A549 (cell line): ENCODE measurements at regions of chr15 and their contacts with region 1.

Region 1: GRCh38 chr15:100559330-100559729 is 30.6 kb upstream of the CERS3 start:
- DNase-seq: peak in 1 of 2 experiments; percentile 36
- ATAC-seq: peak in 1 of 2 experiments; percentile 59; a peak in 4 of 6 replicates
- H3K4me3 ChIP-seq: no peak overlapping the region
- H3K27ac ChIP-seq: no peak overlapping the region
- H3K4me1 ChIP-seq: no peaks in the 10 kb centered on the region; the same call in 2 of the 3 replicates
- CTCF ChIP-seq: no peak
- EP300 ChIP-seq: no peak
- POLR2A ChIP-seq: no peak
- RAD21 ChIP-seq: no peak

Region 2: DNA sequence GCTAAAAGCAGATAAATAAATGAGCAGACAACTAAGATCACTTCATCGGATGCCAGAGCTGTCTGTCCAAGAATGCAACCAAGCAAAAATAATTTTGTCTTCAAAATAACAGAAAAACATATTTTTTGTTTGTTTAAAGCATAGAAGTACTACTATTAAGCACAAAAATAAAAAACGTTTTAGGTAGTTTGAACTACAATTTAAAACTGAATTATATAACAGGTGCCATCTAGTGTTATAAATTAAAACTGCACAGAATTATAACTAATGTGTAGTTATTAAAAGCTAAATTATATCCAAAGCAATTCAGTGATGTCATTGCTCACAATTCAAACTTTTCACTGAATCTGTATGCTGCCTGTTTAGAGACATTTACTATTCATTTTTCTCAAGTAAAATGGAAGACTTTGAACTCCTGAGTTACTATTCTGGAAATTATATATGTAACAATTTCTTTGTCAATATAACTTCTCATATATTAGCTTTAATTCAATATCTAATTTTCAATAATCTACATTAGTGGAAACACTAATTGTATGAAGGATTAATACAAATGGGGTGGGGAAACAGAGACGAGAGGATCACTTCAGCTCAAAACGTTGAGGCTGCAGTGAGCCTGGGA is 13.1 kb after region 1 on chr15:
- CTCF ChIA-PET with region 1: interaction called, 19 read pairs
- POLR2A ChIA-PET with region 1: no interaction called
- DNase-seq: peak in 1 of 2 experiments; percentile 29
- ATAC-seq: no peak
- H3K4me3 ChIP-seq: no peak overlapping the region
- H3K27ac ChIP-seq: no peak overlapping the region
- H3K4me1 ChIP-seq: no peaks in the 10 kb centered on the region
- CTCF ChIP-seq: peak; percentile 59
- EP300 ChIP-seq: no peak
- POLR2A ChIP-seq: no peak
- RAD21 ChIP-seq: peak; percentile 36 to 57; a peak in 4 of 5 replicates